ENCODE measurements at regions of chr12 and their contacts with region 1.

Region 1: DNA sequence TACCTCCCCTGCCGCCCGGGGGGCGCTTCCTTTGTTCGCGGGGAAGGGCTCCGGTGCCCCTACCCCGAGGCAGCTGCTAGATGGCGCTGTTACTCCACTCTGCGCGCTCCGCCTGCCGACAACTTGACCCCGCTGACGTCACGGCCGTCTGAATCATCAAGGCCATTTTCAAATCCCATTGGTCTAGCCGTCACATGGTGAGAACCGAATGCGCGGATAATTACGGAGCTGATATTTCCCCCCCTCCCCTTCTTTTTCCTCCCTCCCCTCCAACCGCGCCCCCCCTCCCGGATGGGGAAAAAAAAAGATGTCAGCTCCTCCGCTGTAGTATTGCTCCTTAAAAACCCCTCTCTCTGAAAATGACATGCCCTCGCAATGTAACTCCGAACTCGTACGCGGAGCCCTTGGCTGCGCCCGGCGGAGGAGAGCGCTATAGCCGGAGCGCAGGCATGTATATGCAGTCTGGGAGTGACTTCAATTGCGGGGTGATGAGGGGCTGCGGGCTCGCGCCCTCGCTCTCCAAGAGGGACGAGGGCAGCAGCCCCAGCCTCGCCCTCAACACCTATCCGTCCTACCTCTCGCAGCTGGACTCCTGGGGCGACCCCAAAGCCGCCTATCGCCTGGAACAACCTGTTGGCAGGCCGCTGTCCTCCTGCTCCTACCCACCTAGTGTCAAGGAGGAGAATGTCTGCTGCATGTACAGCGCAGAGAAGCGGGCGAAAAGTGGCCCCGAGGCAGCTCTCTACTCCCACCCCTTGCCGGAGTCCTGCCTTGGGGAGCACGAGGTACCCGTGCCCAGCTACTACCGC is at the start of gene HOXC10:
- DNase-seq: peak; percentile 75
- H3K4me3 ChIP-seq: peak within 1 kb of the TSS in 2 of 3 experiments; percentile 31 to 38
- H3K27ac ChIP-seq: no peak within 1 kb of the TSS
- H3K4me1 ChIP-seq: peaks cover 23% of the 10 kb centered on the region
- H3K27me3 ChIP-seq: no peaks in the 10 kb centered on the region
- CTCF ChIP-seq: peak; percentile 60 to 80
- total RNA-seq, gene HOXC10: 3.3 to 3.8 TPM

Region 2: GRCh38 chr12:53770281-53770680 is 214.8 kb before region 1 on chr12:
- CTCF ChIA-PET with region 1: interaction called, 3 read pairs
- dilution Hi-C with region 1: loop called (anchors 5 kb)
- in situ Hi-C with region 1: loop called in 1 of 2 experiments (anchors 5 kb)
- intact Hi-C with region 1: loop called (anchors 1 kb)
- DNase-seq: peak; percentile 93
- H3K4me3 ChIP-seq: no peak overlapping the region
- H3K27ac ChIP-seq: peak overlapping the region; percentile 57
- H3K4me1 ChIP-seq: peaks cover 35% of the 10 kb centered on the region
- H3K27me3 ChIP-seq: no peaks in the 10 kb centered on the region
- CTCF ChIP-seq: no peak

Region 3: DNA sequence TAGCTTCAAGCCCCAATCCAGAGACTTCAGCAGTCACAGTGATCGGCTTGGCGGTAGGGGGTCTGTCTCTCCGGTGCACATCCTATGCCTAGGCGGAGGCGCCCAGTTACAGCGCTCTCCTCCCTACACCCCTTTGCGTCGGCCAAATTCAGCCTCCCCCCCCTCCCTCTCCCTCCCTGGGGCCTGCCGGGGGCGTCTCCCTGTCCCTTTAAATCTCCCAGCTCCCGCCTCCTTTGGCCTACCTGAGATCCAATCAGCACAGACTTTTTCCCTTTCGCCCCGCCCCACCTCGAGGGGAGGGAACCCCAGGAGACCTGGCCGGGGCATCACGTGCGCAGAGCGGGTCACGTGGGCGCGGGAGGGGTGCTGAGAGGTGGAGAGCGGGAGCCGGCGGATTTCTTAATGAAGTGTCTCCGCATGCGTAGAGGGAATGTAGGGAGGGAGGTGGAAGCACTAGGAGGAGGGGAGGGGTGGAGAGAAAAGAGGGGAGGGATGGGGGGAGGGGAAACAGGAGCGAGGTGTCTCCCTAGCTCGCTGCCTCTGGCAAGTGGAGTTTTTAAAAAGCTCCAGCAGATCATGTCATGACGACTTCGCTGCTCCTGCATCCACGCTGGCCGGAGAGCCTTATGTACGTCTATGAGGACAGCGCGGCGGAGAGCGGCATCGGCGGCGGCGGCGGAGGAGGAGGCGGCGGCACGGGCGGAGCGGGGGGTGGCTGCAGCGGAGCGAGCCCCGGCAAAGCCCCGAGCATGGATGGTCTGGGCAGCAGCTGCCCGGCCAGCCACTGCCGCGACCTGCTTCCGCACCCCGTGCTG is 46.6 kb before region 1 on chr12 and contains the start of gene HOXC13:
- CTCF ChIA-PET with region 1: interaction called, 4 read pairs
- dilution Hi-C with region 1: no loop called
- in situ Hi-C with region 1: no loop called
- intact Hi-C with region 1: loop called (anchors 2 kb)
- DNase-seq: peak; percentile 100
- H3K4me3 ChIP-seq: peak within 1 kb of the TSS; percentile 73 to 89 (median 88)
- H3K27ac ChIP-seq: peak within 1 kb of the TSS; percentile 40
- H3K4me1 ChIP-seq: peaks cover 15% of the 10 kb centered on the region
- H3K27me3 ChIP-seq: no peaks in the 10 kb centered on the region
- CTCF ChIP-seq: no peak
- total RNA-seq, gene HOXC13: 10.2 to 15.7 TPM

Region 4: GRCh38 chr12:54017878-54018467 is 32.9 kb after region 1 on chr12:
- CTCF ChIA-PET with region 1: no interaction called
- dilution Hi-C with region 1: no loop called
- in situ Hi-C with region 1: no loop called
- intact Hi-C with region 1: loop called (anchors 5 kb)
- DNase-seq: peak; percentile 93
- H3K4me3 ChIP-seq: peak overlapping the region; percentile 63 to 87 (median 69)
- H3K27ac ChIP-seq: peak overlapping the region; percentile 90
- H3K4me1 ChIP-seq: peaks cover 49% of the 10 kb centered on the region
- H3K27me3 ChIP-seq: no peaks in the 10 kb centered on the region
- CTCF ChIP-seq: no peak

Region 5: GRCh38 chr12:54068418-54069070 is 83.4 kb after region 1 on chr12:
- CTCF ChIA-PET with region 1: interaction called, 15 read pairs
- dilution Hi-C with region 1: no loop called
- in situ Hi-C with region 1: no loop called
- intact Hi-C with region 1: no loop called
- DNase-seq: peak; percentile 70
- H3K4me3 ChIP-seq: no peak overlapping the region
- H3K27ac ChIP-seq: no peak overlapping the region
- H3K4me1 ChIP-seq: peaks cover 17% of the 10 kb centered on the region
- H3K27me3 ChIP-seq: no peaks in the 10 kb centered on the region
- CTCF ChIP-seq: no peak

Region 6: GRCh38 chr12:54126696-54127537 is 141.8 kb after region 1 on chr12:
- CTCF ChIA-PET with region 1: no interaction called
- dilution Hi-C with region 1: no loop called
- in situ Hi-C with region 1: no loop called
- intact Hi-C with region 1: no loop called
- DNase-seq: peak; percentile 36
- H3K4me3 ChIP-seq: peak overlapping the region; percentile 59 to 73 (median 63)
- H3K27ac ChIP-seq: no peak overlapping the region
- H3K4me1 ChIP-seq: peaks cover 9% of the 10 kb centered on the region
- H3K27me3 ChIP-seq: no peaks in the 10 kb centered on the region
- CTCF ChIP-seq: no peak

Region 7: DNA sequence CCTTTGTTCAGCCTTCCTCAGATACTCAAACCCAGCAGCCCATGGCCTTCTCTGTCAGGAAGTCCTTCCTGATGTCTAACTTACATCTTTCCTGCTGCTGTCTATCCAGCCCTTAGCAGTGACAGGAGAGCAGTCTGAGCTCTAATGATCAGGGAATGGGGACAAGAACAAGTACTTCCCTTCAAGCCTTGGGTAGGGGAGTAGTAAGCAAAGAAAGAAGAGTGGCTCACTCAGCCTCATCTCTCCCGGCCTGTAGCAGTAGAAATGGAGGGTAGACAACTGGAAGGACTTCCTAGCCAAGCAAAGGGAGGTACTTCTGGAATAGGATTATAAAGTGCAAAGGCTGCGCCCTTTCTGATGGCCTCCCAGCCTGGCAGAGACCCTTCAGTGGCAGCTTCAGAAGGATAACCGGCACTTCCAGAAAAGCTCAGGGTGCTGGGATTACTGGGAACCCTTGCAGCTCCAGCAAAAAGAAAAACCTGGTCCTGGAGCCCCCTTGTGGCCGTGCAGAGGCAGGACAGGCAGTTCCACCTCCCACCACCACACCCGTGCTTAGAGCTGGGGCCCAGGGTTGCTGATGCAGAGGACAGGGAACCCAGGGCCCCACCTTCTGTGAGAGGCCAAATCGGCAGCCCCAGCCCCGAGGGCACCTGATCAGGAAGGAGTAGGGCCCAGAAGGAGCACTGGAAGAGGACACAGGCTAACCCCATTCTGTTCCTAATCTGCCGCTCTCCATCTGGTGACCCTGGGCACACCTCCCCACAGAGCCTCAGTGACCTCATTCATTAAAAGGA is 216.1 kb after region 1 on chr12:
- CTCF ChIA-PET with region 1: interaction called, 5 read pairs
- dilution Hi-C with region 1: no loop called
- in situ Hi-C with region 1: loop called in 1 of 2 experiments (anchors 10 kb)
- intact Hi-C with region 1: loop called (anchors 2 kb)
- DNase-seq: peak; percentile 43
- H3K4me3 ChIP-seq: no peak overlapping the region
- H3K27ac ChIP-seq: no peak overlapping the region
- H3K4me1 ChIP-seq: peaks cover 4% of the 10 kb centered on the region
- H3K27me3 ChIP-seq: no peaks in the 10 kb centered on the region
- CTCF ChIP-seq: peak; percentile 95 to 99

Region 8: GRCh38 chr12:54214553-54215406 is 229.7 kb after region 1 on chr12:
- CTCF ChIA-PET with region 1: no interaction called
- dilution Hi-C with region 1: no loop called
- in situ Hi-C with region 1: loop called in 1 of 2 experiments (anchors 10 kb)
- intact Hi-C with region 1: loop called (anchors 2 kb)
- DNase-seq: peak; percentile 72
- H3K4me3 ChIP-seq: peak overlapping the region; percentile 19 to 29 (median 20)
- H3K27ac ChIP-seq: no peak overlapping the region
- H3K4me1 ChIP-seq: peaks cover 14% of the 10 kb centered on the region
- H3K27me3 ChIP-seq: no peaks in the 10 kb centered on the region
- CTCF ChIP-seq: peak; percentile 91 to 98